Heart left ventricle (tissue), 16 donors: ENCODE measurements at regions of chr5 and their contacts with region 1.

Region 1: GRCh38 chr5:150398722-150399523 is 13.8 kb downstream of the CD74 start:
- DNase-seq: peak in 1 of 5 donors; percentile 29
- ATAC-seq: no peak
- H3K4me3 ChIP-seq: no peak overlapping the region
- H3K27ac ChIP-seq: no peak overlapping the region
- H3K4me1 ChIP-seq: peaks cover 0 to 4% (median 0%) of the 10 kb centered on the region in 12 donors
- H3K27me3 ChIP-seq: no peaks in the 10 kb centered on the region
- CTCF ChIP-seq: peak in 5 of 12 donors; percentile 14 to 24 (median 16)
- POLR2A ChIP-seq: no peak

Region 2: DNA sequence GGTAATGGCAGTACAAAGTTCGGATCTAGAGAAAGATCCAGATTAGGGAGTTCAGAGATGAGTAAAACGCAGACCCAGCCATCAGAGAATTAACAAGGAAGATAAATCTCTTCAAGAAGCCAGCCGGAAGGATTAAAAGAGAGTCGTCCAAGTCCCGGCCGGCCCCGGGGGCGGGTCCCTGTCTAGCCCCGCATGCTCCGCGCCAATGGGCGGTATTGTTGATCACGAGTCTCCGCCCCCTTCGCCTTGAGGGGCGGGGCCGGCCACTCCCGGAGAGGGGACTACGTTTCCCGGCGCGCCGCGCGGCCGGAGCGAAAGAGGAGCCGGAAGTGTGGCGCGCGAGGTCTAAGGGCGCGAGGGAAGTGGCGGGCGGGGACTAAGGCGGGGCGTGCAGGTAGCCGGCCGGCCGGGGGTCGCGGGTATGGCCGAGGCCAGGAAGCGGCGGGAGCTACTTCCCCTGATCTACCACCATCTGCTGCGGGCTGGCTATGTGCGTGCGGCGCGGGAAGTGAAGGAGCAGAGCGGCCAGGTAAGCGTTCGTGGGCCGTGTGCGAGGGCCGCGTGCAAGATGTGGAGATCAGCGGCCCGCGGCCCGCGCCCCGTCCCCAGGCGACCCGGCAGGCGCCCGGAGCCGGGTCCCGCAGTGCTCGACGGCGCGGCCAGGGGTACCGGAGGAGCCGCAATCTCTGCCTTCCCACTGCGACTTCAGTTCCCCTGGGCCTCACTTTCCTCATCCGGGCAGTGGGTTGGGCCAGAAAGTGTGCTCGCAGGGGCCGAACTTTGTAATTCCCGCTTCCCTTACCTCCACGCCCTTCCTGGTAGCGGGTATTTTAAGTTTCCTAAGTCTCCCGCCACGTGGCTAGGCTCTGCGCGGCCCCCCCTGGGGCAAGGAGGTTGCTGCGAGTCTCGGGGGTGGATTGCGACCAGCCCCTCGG is 41.3 kb before region 1 on chr5 and contains the start of gene TCOF1:
- intact Hi-C with region 1: no loop called
- DNase-seq: peak; percentile 96 to 98 (median 96)
- ATAC-seq: peak; percentile 97 to 100 (median 99)
- H3K4me3 ChIP-seq: peak within 1 kb of the TSS; percentile 72 to 99 (median 92)
- H3K27ac ChIP-seq: peak within 1 kb of the TSS in 10 of 12 donors; percentile 41 to 76 (median 65)
- H3K4me1 ChIP-seq: peaks cover 0 to 23% (median 12%) of the 10 kb centered on the region in 12 donors
- H3K27me3 ChIP-seq: no peaks in the 10 kb centered on the region
- CTCF ChIP-seq: peak in 1 of 12 donors; percentile 12
- POLR2A ChIP-seq: no peak
- total RNA-seq, gene TCOF1: 12.6 to 29.9 (median 16.0) TPM

Region 3: DNA sequence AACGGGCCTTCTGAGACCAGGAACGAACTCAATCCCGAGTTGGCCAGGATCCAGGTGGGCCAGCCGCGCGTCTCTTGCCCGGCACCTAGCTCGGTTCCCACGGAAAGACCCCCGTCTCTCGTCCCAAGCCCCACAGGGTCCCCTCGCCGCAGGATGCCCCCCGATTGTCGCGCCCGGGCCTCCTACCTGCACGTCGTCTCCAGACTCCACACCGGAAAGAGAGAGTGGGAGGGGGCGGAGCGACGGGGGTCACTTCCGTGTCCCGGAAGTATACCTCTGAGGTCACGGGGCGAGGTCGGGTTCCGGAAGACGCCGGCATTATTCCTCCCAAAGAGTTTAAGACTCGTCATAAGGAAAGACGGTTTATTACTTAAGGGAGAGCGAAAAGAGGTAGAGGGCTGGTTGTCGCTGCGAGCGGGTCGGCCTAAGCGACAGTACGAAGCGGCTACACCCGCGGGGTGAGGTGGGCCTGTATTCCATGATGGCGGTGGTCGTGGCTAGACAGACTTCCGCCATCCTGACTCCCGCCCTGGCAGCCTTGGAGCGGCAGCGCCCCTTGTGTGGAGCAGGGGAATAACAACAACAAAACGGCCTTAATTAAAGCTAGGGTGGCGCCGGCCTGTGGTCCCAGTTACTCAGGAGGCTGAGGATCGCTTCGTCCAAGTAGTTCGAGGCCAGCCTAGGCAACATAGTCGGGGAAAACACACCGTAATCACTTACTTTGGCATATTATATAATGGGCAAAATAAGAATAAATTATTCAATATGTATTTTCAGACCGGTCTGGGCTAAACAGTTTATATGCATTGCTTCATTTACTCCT is 50.8 kb after region 1 on chr5 and contains the start of gene RPS14:
- intact Hi-C with region 1: loop called in 1 of 10 experiments (anchors 10 kb)
- DNase-seq: peak; percentile 93 to 96 (median 95)
- ATAC-seq: peak; percentile 96 to 98 (median 97)
- H3K4me3 ChIP-seq: peak within 1 kb of the TSS; percentile 75 to 90 (median 83)
- H3K27ac ChIP-seq: peak within 1 kb of the TSS; percentile 89 to 99 (median 96)
- H3K4me1 ChIP-seq: peaks cover 0 to 37% (median 16%) of the 10 kb centered on the region in 12 donors
- H3K27me3 ChIP-seq: no peaks in the 10 kb centered on the region
- CTCF ChIP-seq: peak; percentile 79 to 99 (median 94)
- POLR2A ChIP-seq: peak in 1 of 2 donors; percentile 84
- total RNA-seq, gene RPS14: 1,031 to 1,428 (median 1,294) TPM